Prostate gland (tissue), 2 donors: ENCODE measurements at regions of chr11 and their contacts with region 1.

Region 1: GRCh38 chr11:57567515-57568329 is at the start of gene UBE2L6:
- DNase-seq: peak; percentile 70
- H3K4me3 ChIP-seq: peak within 1 kb of the TSS; percentile 60 to 81
- H3K27ac ChIP-seq: peak within 1 kb of the TSS; percentile 83 to 85
- H3K4me1 ChIP-seq: peaks cover 4% of the 10 kb centered on the region
- H3K27me3 ChIP-seq: no peaks in the 10 kb centered on the region
- CTCF ChIP-seq: peak in 2 of 4 experiments; percentile 83 to 89
- POLR2A ChIP-seq: no peak
- total RNA-seq, gene UBE2L6: 42.3 to 44.6 TPM

Region 2: GRCh38 chr11:57358543-57358961 is 209.2 kb before region 1 on chr11:
- intact Hi-C with region 1: no loop called
- DNase-seq: no peak
- H3K4me3 ChIP-seq: no peak overlapping the region
- H3K27ac ChIP-seq: no peak overlapping the region
- H3K4me1 ChIP-seq: no peaks in the 10 kb centered on the region
- H3K27me3 ChIP-seq: no peaks in the 10 kb centered on the region
- CTCF ChIP-seq: no peak
- POLR2A ChIP-seq: no peak

Region 3: DNA sequence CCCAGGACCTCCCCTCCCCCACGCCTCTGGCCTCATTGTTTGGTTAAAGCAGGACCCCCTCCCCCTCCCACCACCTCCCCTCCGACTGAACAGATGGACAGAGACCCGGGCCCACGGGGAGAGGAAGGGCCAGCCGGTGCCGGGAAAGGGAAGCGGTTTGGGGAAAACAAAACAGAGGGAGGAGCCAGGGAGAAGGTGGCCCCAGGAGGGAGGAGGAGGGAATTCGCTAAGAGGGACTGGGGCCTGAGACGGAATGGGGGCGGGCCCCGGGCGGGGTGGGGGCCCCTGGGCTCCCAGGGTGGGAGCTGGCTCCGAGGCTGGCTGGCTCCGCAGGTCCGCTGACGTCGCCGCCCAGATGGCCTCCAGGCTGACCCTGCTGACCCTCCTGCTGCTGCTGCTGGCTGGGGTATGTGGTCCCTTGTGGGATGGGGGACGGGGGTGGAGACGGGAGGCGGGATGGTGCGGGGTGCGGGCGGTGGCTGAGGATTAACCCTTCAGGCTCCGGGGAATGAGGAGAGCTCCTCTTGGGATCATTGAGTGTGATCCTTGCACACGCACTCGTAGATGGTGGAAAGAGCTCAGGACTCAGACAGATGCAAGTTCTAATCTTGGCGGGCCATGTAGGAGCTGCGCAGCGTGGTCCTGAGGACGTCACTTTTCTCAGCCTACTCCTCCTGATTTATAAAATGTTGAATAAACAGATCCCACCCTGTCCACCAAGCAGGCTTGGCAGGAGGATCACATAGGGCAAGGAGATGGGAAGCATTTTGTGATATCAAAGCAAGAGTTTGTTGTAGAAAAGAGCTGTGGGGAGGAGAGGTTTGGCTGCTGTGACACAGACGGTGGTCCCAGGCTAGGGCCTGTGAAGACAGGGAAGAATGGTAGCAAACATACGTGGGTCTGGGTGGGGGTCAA is 30.5 kb after region 1 on chr11:
- intact Hi-C with region 1: loop called (anchors 2 kb)
- DNase-seq: peak; percentile 59
- H3K4me3 ChIP-seq: peak overlapping the region; percentile 48
- H3K27ac ChIP-seq: peak overlapping the region; percentile 71 to 82
- H3K4me1 ChIP-seq: no peaks in the 10 kb centered on the region
- H3K27me3 ChIP-seq: no peaks in the 10 kb centered on the region
- CTCF ChIP-seq: no peak
- POLR2A ChIP-seq: peak; percentile 14

Region 4: GRCh38 chr11:57644748-57645688 is 77.3 kb after region 1 on chr11:
- intact Hi-C with region 1: loop called (anchors 2 kb)
- DNase-seq: peak; percentile 82
- H3K4me3 ChIP-seq: no peak overlapping the region
- H3K27ac ChIP-seq: peak overlapping the region; percentile 7 to 61
- H3K4me1 ChIP-seq: peaks cover 8% of the 10 kb centered on the region
- H3K27me3 ChIP-seq: peaks cover 5% of the 10 kb centered on the region
- CTCF ChIP-seq: peak; percentile 65 to 91 (median 74)
- POLR2A ChIP-seq: no peak